Caco-2 (cell line): ENCODE measurements at regions of chr3 and their contacts with region 1.

Region 1: DNA sequence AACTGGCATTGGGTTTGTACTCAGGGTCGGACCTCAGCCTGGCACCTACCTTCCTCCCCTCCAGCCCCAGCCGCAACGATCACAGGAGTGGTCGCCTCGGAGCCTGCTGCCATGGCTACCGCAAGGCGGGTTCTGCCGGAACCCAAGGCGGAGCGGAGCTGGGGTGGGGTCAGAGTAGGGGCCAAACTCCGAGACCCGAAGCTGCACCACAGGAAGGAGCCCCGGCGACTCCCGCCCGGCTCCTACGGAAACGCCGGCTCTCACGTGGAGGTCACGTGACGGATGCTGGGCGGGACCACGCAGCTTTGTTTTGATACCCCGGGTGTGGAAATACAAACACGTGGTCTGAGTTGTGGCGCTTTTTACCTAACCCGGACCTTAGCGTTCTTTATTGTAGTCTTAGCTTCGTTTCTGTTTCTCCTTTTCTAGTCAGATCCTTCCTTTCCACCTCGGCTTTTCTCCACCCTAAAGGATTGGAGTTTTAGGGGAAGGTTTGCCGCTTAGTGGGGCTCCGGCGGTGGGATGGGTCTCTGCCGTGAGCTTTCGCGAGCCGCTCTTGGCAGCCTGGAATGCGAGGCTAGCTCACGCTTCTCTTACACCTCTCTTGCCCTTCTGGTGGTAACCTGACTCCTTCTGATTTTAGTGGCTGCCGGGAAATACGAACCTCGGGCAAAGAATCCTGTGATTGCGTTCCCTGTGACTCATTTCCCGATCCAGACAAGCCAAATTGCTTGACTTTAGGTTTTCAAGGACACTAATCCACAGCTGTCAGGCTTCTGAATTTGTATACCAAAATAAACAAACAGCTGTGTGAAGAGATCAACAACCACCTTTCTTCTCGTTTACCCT is at the start of gene HSPBAP1:
- DNase-seq: peak; percentile 91 to 92
- H3K4me3 ChIP-seq: peak within 1 kb of the TSS; percentile 95
- H3K4me3 Mint-ChIP-seq: no peak within 1 kb of the TSS
- H3K27ac Mint-ChIP-seq: peak within 1 kb of the TSS; percentile 72
- H3K4me1 ChIP-seq: peaks cover 15% of the 10 kb centered on the region
- H3K4me1 Mint-ChIP-seq: peaks cover 8% of the 10 kb centered on the region
- H3K27me3 ChIP-seq: no peaks in the 10 kb centered on the region
- H3K27me3 Mint-ChIP-seq: no peaks in the 10 kb centered on the region
- CTCF ChIP-seq: peak in 1 of 2 experiments; percentile 4
- total RNA-seq, gene HSPBAP1: 9.9 and 13.1 TPM in 2 replicates

Region 2: DNA sequence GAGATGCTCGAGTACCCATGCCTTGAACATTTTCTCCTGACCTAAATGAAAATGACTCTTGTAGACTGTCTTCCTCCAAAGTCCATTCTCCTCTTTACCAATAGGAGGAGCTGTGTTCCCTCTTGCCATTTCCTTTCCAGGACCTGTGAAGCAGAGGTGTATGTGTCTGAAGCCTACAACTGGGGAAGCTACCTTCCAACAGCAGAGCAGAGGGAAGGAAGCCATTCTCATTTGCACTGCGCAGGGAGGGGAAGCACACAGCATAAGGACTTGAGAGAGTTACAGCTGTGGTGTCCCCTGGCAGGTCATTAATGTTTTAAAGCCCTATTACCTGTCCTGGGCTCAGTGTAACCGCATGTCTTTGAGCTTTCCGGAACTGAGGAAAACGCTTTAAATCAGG is 38.9 kb before region 1 on chr3:
- CTCF ChIA-PET with region 1: interaction called, 10 read pairs
- POLR2A ChIA-PET with region 1: interaction called, 15 read pairs
- intact Hi-C with region 1: loop called (anchors 1 kb)
- DNase-seq: peak; percentile 71 to 76
- H3K4me3 ChIP-seq: no peak overlapping the region
- H3K4me3 Mint-ChIP-seq: peak overlapping the region; percentile 43
- H3K27ac Mint-ChIP-seq: peak overlapping the region; percentile 93
- H3K4me1 ChIP-seq: peaks cover 43% of the 10 kb centered on the region
- H3K4me1 Mint-ChIP-seq: peaks cover 35% of the 10 kb centered on the region
- H3K27me3 ChIP-seq: no peaks in the 10 kb centered on the region
- H3K27me3 Mint-ChIP-seq: no peaks in the 10 kb centered on the region
- CTCF ChIP-seq: peak; percentile 75 to 82